ENCODE measurements at regions of chr20 and their contacts with region 1.

Region 1: DNA sequence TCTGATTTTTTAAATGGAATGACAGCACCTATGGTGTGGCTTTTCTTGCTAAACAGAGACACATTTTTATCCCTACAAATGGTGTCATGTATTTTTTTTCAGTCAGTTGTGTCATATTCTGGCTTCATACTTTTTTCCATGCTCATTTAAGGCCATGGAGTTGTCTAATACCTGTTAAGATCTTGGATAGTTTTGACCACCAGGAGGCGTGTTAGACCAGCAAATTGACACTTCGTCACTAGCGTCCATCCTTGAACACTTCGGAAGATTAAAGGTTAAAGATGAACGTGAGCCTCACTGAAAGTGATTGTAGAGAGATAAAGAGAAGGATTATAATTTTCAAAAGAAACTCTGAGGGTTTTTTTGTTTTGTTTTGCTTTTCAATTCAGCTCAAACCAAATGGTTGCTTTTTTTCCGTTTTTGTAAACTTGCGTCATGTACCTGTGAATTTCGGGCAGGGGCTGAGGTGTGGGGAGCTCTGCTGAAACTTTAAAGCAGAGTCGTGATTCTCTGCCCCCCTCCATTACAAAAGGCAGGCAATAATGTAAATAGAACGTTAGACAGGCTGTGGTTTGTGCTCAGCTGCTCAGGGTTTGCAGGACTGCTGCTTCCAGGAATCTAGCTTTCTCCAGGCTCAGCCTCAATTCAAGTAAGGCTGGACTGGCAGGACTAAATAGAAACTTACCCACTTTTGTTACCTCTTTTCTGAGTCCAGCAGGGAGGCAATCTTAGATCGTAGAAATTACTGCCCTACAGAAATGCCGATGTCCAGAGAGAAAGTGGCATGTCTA is 245.1 kb downstream of the FOXA2 start:
- DNase-seq: peak; percentile 64
- H3K4me3 ChIP-seq: no peak overlapping the region
- H3K27ac ChIP-seq: no peak overlapping the region
- H3K4me1 ChIP-seq: no peaks in the 10 kb centered on the region
- H3K27me3 ChIP-seq: peaks cover 5 to 10% of the 10 kb centered on the region in 2 experiments
- CTCF ChIP-seq: peak; percentile 60 to 61
- POLR2A ChIP-seq: no peak

Region 2: GRCh38 chr20:21548390-21549035 is 790.8 kb before region 1 on chr20:
- CTCF ChIA-PET with region 1: no interaction called
- POLR2A ChIA-PET with region 1: no interaction called
- dilution Hi-C with region 1: no loop called
- intact Hi-C with region 1: no loop called
- DNase-seq: no peak
- H3K4me3 ChIP-seq: no peak overlapping the region
- H3K27ac ChIP-seq: no peak overlapping the region
- H3K4me1 ChIP-seq: no peaks in the 10 kb centered on the region
- H3K27me3 ChIP-seq: no peaks in the 10 kb centered on the region
- CTCF ChIP-seq: no peak
- POLR2A ChIP-seq: no peak

Region 3: DNA sequence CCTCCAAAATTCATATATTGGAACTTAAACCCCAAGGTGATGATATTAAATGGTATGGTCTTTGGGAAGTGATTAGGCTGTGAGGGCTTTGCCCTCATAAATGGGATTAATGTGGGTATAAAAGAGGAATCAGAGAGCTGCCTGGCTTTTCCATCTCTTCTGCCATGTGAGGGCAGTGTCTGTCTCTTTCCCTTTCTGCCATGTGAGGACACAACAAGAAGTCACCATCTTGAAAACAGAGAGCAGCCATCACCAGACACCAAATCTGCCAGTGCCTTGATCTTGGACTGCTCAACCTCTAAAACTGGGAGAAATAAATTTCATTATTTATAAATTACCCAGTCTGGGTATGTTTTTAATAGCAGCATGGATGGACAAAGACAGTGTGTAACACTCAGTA is 370.8 kb before region 1 on chr20:
- CTCF ChIA-PET with region 1: no interaction called
- POLR2A ChIA-PET with region 1: no interaction called
- dilution Hi-C with region 1: no loop called
- intact Hi-C with region 1: no loop called
- DNase-seq: no peak
- H3K4me3 ChIP-seq: no peak overlapping the region
- H3K27ac ChIP-seq: no peak overlapping the region
- H3K4me1 ChIP-seq: no peaks in the 10 kb centered on the region
- H3K27me3 ChIP-seq: no peaks in the 10 kb centered on the region
- CTCF ChIP-seq: no peak
- POLR2A ChIP-seq: no peak

Region 4: DNA sequence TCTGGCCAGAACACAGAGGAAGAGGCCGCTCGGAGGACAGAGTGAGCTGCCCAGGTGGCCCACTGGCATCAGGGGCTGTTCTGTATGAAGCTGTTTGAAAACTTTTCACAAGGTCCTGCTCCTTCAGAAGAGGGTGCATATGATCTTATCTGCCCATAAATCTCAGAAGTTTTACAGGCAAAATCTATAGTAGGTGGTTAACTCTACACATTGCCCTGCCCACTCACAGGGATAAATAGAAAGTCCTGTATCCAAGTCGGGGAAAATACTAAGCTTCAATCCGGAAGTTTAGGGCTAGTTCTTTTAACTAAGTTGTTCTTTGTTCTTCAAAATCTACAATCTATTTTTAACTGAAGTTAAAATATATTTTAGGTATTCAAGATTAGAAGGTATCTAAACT is 11.3 kb after region 1 on chr20:
- CTCF ChIA-PET with region 1: interaction called, 14 read pairs
- POLR2A ChIA-PET with region 1: no interaction called
- dilution Hi-C with region 1: no loop called
- intact Hi-C with region 1: no loop called
- DNase-seq: no peak
- H3K4me3 ChIP-seq: no peak overlapping the region
- H3K27ac ChIP-seq: no peak overlapping the region
- H3K4me1 ChIP-seq: no peaks in the 10 kb centered on the region
- H3K27me3 ChIP-seq: no peaks in the 10 kb centered on the region
- CTCF ChIP-seq: no peak
- POLR2A ChIP-seq: no peak

Region 5: DNA sequence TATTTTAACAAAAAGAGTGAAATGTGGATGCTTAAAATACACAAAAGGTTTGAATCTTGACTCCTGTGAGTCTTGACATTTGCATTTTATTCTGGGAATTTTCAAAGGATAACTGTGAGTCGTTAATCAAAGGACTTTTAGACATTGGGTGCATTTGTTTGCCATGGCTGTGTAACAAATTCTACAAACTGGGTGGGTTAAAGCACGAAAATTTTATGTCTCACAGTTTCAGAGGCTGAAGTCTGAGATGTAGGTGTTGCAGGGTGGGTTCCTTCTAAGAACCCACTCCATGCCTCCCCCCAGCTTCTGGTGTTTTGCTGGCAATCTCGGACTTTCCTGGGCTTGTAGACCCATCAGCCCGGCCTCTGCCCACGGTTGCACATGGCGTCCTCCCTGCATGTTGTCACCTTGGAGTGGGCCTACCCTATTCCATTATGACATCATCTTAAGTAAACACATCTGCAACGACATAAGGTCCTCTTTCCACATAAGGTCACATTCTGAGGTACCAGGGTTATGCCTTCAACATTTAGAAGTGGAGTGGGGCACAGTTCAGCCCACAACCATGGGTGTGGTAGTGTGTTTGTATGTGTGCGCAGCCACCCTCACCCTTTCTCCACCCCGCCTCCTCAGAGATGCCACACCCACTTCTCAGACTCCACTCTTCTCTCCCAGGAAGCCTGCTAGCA is 132.0 kb after region 1 on chr20:
- CTCF ChIA-PET with region 1: no interaction called
- POLR2A ChIA-PET with region 1: no interaction called
- dilution Hi-C with region 1: no loop called
- intact Hi-C with region 1: no loop called
- DNase-seq: no peak
- H3K4me3 ChIP-seq: no peak overlapping the region
- H3K27ac ChIP-seq: no peak overlapping the region
- H3K4me1 ChIP-seq: no peaks in the 10 kb centered on the region
- H3K27me3 ChIP-seq: no peaks in the 10 kb centered on the region
- CTCF ChIP-seq: no peak
- POLR2A ChIP-seq: no peak